ENCODE measurements at regions of chr6 and their contacts with region 1.

Region 1: GRCh38 chr6:70547313-70547712 is 19.4 kb upstream of the SDHAF4 start:
- DNase-seq: no peak
- ATAC-seq: peak; percentile 54

Region 2: DNA sequence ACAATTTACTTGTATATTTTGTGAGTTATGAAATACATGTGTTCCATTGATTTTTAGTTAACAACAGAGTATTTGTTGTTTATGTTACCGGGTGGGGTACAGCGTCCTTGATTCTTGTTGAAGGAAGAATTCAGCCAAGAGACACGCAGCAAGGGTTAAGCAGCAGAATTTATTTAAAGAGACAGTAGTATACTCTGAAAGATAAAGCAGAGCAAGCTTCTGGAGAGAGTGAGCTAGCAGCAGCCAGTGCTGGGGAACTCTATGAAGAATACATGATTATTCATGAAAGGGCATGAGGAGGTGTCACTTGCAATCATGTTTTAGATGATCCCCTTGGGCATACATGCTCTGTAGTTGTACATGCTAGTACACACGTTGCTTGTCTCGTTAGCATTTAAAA is 57.9 kb before region 1 on chr6:
- intact Hi-C with region 1: no loop called
- DNase-seq: no peak
- ATAC-seq: no peak

Region 3: GRCh38 chr6:70586114-70586513 is 38.8 kb after region 1 on chr6:
- intact Hi-C with region 1: no loop called
- DNase-seq: no peak
- ATAC-seq: no peak

Region 4: DNA sequence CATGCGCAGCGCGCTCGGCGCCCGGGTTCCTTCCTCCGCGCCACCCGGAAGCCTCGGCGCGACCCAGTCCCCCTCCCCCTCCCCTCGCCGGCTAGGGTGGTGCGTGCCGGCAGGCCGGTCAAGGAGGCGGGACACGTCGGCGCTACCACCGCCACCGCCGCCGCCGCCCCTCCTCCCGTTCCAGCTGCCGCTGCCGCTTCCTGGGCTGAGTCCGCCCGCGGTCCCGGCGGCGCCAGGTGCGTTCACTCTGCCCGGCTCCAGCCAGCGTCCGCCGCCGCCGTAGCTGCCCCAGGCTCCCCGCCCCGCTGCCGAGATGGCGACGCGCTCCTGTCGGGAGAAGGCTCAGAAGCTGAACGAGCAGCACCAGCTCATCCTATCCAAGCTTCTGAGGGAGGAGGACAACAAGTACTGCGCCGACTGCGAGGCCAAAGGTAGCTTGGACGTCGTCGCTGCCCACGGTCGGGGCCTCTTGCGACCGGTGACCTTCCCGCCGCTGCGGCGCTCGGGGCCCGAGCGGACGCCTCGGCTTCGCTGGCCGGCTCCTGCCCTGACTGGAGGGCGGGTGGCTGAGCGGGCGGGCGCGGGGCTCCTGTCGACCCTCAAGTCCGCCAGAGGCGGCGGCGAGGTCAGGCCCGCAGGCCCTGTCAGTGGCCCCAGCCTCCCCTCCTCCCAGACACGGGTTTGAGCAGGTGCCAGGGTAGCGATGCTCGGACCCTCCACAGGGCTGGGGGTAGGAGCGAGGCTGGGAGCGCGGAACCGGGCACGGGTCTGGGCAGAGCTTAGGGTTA is 120.6 kb after region 1 on chr6 and contains the start of gene SMAP1:
- intact Hi-C with region 1: loop called (anchors 5 kb)
- DNase-seq: peak; percentile 97
- ATAC-seq: peak; percentile 99
- total RNA-seq, gene SMAP1: 27.3 TPM

Region 5: GRCh38 chr6:70763754-70764510 is 216.6 kb after region 1 on chr6:
- intact Hi-C with region 1: no loop called
- DNase-seq: no peak
- ATAC-seq: no peak

Region 6: DNA sequence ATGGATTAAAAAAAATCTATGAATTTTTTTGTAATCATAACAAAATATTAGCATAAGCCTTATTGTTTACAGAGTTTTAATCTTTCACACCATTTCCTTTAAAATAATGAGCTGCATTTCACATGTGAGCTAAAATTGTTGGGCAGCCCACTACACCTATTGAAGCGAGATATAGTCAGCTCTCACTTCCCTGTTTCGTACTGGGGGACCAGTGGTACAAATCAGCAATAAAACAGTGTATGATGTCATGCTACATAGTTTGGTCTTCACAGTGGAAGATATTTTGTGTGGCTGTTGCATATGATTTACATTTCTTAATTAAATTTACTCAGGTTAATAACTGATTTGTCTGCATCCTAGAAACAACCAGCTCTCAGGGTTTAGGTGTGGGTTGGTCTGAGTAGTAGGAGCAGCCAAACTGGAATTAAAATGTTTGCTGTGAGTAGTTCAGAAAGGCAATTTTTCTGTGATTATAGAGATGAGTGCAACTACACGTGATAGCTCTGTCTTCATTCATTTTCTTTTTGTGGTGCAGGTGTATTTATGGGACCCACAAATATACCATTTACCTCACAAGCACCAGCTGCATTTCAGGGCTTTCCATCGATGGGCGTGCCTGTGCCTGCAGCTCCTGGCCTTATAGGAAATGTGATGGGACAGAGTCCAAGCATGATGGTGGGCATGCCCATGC is 310.2 kb after region 1 on chr6:
- intact Hi-C with region 1: no loop called
- DNase-seq: no peak
- ATAC-seq: no peak

Region 7: GRCh38 chr6:70884074-70884983 is 337.0 kb after region 1 on chr6:
- intact Hi-C with region 1: loop called (anchors 5 kb)
- DNase-seq: peak; percentile 82
- ATAC-seq: peak; percentile 77

Region 8: DNA sequence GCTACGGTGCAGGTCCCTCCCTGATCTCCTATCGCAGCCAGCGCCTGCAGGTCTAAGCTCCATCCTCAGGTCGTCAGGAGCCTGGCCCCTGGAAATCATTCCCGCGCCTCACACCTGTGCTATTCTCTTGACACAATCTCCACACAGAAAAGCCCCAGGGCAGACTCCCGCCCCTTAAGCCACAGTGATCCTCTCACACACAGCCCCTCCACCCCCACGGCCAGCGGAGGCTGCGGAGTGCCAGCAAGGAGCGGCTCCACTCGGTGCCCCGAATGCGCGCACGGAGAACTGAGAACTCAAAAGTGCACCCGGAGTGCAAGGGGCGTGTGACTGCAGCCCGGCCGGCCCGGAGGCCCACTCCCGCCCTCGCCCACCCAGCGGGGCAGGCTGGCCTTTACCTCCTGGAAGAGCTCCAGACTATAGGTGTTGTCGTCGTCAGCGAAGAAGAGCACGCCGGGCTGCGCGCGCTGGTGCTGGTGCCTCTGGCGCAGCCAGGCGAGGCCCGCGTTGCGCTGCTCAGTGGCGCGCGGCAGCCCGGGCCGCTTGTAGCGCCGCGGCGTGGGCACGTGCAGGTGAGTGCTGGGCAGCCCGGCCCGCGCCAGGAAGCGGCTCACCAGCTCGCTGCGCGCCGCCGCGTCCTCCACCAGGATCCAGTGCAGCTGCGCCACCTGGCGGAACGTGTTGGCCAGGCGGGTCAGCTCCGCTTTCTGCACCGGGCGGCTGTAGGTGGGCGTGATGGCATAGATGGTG is 408.3 kb after region 1 on chr6:
- intact Hi-C with region 1: loop called (anchors 10 kb)
- DNase-seq: peak; percentile 93
- ATAC-seq: peak; percentile 92

Region 9: GRCh38 chr6:71012866-71013469 is 465.7 kb after region 1 on chr6:
- intact Hi-C with region 1: loop called (anchors 5 kb)
- DNase-seq: no peak
- ATAC-seq: no peak

Measured in Right ventricle myocardium inferior (tissue), 1 donor.